GM23248 (cell line): ENCODE measurements at regions of chr7 and their contacts with region 1.

Region 1: DNA sequence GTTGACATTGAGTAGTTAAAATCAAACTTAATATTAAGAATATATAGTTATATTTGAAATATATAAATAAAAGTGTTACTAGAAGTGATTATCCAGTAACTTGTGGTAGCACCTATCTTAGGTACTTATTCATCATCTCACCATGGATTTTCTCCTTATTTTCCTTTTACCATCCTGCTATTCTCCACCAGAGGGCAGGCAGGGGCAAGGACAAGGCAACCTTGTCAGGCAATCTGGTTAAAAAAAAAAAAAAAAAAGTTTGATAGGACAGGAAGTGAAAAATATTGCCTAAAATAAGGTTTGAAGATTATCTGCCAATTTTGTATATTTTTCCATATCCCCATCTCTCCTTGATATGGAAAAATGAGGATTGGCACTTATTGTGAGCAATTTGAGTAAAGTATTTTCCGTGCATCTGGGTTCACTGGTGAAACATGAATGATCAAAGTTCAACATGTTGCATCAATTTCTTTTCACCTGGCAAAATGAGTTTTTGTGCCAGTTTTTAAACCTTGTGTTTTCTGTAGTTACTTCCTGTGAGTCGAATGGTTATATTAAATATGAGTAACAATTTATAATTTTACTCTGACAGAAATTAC is 256.7 kb downstream of the AGMO start:
- DNase-seq: peak; percentile 71
- H3K4me3 ChIP-seq: no peak overlapping the region
- H3K27ac ChIP-seq: no peak overlapping the region
- H3K4me1 ChIP-seq: peaks cover 6% of the 10 kb centered on the region; the same call in 1 of the 2 replicates
- H3K27me3 ChIP-seq: no peaks in the 10 kb centered on the region

Region 2: DNA sequence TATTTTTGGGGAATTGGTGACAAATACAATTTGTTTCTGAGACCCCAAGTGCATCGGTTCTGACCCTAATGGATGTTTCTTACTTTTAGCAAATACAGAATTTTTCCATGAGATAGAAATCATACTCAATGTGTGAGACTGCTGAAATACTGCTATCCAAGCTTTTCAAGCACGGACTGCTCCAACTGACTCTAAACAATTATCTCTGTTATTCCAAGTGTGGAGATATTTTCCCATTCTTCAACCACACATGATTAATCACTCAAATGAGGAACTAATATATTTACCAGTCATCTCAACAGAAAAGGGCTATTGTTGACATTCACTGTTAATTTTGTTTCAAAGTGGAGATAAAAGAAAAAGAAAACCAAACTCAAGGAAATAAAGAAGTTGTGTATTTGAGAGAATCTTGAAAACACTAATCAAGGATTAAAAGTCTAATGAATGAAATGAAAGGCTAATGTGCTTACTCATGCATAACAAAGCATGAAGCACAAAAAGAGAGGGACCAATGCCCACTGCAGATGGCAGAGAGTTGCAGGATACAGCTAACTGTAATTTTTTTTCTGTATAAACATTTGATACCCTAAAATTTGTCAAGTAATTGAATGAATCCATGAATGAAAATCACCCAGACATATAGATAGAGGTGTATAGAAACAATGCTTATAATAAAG is 826.1 kb before region 1 on chr7:
- in situ Hi-C with region 1: no loop called
- DNase-seq: no peak
- H3K4me3 ChIP-seq: no peak overlapping the region
- H3K27ac ChIP-seq: no peak overlapping the region
- H3K4me1 ChIP-seq: no peaks in the 10 kb centered on the region
- H3K27me3 ChIP-seq: no peaks in the 10 kb centered on the region

Region 3: GRCh38 chr7:15720849-15721471 is 415.9 kb after region 1 on chr7:
- in situ Hi-C with region 1: loop called (anchors 25 kb)
- DNase-seq: peak; percentile 47
- H3K4me3 ChIP-seq: no peak overlapping the region
- H3K27ac ChIP-seq: no peak overlapping the region
- H3K4me1 ChIP-seq: no peaks in the 10 kb centered on the region
- H3K27me3 ChIP-seq: no peaks in the 10 kb centered on the region

Region 4: DNA sequence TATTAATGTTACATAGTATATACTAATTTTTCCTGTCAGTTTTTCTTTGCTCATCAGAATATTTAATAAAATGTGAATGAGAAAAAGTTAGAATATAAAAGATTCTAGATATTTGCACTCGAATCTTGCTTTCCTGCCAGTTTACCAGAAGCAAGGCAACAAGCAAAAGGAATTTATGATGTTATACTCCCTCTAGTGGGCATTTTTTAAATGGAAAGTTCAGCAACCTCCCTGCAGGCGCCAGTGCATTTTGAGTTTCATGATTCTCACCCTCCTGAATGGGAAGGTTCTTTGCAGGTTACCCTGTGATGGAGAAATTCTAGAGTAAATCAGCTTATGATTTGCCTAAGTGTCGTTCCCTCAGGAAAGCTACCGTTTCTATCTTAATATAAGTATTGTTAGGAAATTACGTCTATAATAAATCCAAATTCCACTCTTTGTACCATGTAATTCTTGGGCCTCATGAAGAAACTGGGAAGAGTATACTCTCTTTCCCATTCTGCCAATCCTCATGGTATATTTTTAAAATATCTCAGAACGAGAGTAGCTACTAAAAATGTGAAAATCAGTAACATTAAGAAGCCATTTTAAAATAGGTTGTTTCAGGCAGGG is 766.3 kb after region 1 on chr7:
- in situ Hi-C with region 1: loop called (anchors 10 kb)
- DNase-seq: peak; percentile 77
- H3K4me3 ChIP-seq: no peak overlapping the region
- H3K27ac ChIP-seq: no peak overlapping the region
- H3K4me1 ChIP-seq: 0 out of 2 replicates have a peak, but pooled peaks cover 8% of the 10 kb centered on the region
- H3K27me3 ChIP-seq: 0 out of 2 replicates have a peak, but pooled peaks cover 5% of the 10 kb centered on the region

Region 5: DNA sequence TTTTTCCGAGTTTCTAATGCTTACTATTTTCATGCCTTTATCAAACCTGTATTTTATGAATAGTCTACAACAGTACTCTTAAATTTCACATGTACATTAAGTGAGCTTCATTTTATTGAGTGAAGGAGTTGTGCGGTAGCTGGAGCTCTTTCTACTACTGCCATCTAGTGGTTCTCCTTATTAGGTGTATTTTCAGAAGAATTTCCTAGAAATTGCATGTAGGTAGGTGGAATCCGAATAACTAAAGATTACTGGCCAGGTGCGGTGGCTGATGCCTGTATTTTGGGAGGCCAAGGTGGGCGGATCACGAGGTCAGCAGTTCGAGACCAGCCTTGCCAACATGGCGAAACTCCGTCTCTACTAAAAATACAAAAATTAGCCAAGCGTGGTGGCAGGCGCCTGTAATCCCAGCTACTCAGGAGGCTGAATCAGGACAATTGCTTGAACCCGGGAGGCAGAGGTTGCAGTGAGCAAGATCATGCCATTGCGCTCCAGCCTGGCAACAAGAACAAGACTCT is 1259.9 kb after region 1 on chr7:
- in situ Hi-C with region 1: loop called (anchors 25 kb)
- DNase-seq: peak; percentile 66
- H3K4me3 ChIP-seq: no peak overlapping the region
- H3K27ac ChIP-seq: no peak overlapping the region
- H3K4me1 ChIP-seq: no peaks in the 10 kb centered on the region
- H3K27me3 ChIP-seq: no peaks in the 10 kb centered on the region